Endothelial cell of umbilical vein (primary cell): ENCODE measurements at regions of chr2 and their contacts with region 1.

Region 1: GRCh38 chr2:238263204-238264071 is 23.6 kb upstream of the HES6 start:
- DNase-seq: peak; percentile 93
- H3K4me3 ChIP-seq: no peak overlapping the region
- H3K27ac ChIP-seq: no peak overlapping the region
- H3K4me1 ChIP-seq: peaks cover 15% of the 10 kb centered on the region
- H3K27me3 ChIP-seq: no peaks in the 10 kb centered on the region
- CTCF ChIP-seq: peak; percentile 87 to 90
- POLR2A ChIP-seq: no peak

Region 2: GRCh38 chr2:237858294-237859081 is 404.9 kb before region 1 on chr2:
- CTCF ChIA-PET with region 1: interaction called, 74 read pairs
- POLR2A ChIA-PET with region 1: no interaction called
- dilution Hi-C with region 1: no loop called
- intact Hi-C with region 1: loop called (anchors 1 kb)
- DNase-seq: peak; percentile 60
- H3K4me3 ChIP-seq: no peak overlapping the region
- H3K27ac ChIP-seq: no peak overlapping the region
- H3K4me1 ChIP-seq: no peaks in the 10 kb centered on the region
- H3K27me3 ChIP-seq: peaks cover 37 to 45% of the 10 kb centered on the region in 2 experiments
- CTCF ChIP-seq: peak; percentile 55 to 81
- POLR2A ChIP-seq: no peak

Region 3: DNA sequence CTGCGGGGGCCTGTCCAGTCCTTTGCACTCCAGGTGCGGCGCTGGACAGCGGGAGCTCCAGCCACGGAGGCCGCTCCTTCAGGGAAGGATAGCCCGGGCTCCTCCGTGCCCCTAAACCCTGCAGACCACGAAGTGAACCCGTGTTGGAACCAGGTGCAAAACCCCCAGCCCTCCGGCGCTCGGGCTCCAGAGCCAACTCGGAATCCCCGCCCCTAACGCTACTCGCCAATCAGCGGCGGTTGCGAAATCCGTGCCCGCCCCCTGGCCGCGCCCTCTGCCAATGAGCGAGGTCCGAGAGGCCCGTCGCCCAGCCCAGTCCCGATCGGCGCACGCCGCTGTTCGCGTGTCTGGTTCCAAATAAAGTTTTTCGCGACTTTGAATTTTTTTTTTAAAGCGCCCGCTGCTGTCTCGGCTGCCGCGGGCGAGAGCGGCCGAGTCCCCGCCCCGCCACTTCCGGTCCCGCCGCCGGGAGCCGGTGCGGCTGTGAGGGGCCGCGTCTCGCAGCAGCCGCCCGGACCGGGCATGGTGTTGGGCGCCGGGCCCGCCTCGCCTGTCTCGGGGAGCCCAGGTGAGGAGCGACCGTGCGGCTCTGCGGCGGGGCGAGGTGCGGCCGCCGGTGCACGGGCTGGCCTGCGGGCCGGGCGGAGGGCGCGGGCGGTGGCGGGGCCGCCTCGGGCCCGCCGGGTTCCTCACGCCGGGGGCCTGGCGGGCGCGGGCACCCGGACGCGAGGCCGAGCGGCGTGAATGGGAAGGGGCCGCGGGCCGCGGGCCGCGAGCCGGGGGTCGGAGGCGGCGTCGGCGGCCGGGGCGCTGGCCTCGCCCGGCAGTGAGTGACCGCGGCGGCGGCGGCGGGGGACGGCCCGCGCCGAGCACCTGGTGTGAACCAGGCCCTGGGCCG is 296.6 kb before region 1 on chr2 and contains the start of gene UBE2F:
- CTCF ChIA-PET with region 1: no interaction called
- POLR2A ChIA-PET with region 1: no interaction called
- dilution Hi-C with region 1: no loop called
- intact Hi-C with region 1: loop called (anchors 5 kb)
- DNase-seq: peak; percentile 96
- H3K4me3 ChIP-seq: peak within 1 kb of the TSS; percentile 40 to 65 (median 63)
- H3K27ac ChIP-seq: no peak within 1 kb of the TSS
- H3K4me1 ChIP-seq: peaks cover 10% of the 10 kb centered on the region
- H3K27me3 ChIP-seq: no peaks in the 10 kb centered on the region
- CTCF ChIP-seq: no peak
- POLR2A ChIP-seq: peak; percentile 73
- total RNA-seq, gene UBE2F: 42.3 and 47.4 TPM in 2 replicates

Region 4: DNA sequence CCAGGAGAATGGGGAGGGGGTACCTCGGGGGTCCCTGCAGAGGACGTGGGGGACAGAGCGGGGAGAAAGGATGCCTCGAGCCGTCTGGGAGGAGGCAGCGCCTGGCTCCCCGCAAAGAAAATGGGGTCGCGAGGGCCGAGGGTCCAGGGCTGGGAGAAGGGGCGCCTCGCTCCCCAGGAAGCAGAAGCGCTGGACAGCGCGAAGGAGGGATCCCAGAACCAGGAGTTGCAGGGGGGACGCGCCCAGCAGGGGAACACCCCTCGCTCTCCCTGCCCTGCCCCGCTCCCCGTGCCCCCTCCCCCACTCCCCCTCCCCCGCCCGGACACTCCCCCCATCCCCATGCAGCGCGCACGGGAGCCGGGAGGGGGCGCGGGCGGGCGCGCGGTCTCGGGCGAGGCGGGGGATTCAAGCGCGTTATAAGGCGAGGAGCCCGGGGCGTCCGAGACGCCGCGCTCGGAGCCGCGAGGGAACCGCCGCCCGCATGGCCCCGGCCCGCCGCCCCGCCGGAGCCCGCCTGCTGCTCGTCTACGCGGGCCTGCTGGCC is 104.8 kb before region 1 on chr2 and contains the start of gene ERFE:
- CTCF ChIA-PET with region 1: interaction called, 35 read pairs
- POLR2A ChIA-PET with region 1: no interaction called
- dilution Hi-C with region 1: no loop called
- intact Hi-C with region 1: loop called (anchors 1 kb)
- DNase-seq: no peak
- H3K4me3 ChIP-seq: no peak within 1 kb of the TSS
- H3K27ac ChIP-seq: no peak within 1 kb of the TSS
- H3K4me1 ChIP-seq: no peaks in the 10 kb centered on the region
- H3K27me3 ChIP-seq: peaks cover 3 to 7% of the 10 kb centered on the region in 2 experiments
- CTCF ChIP-seq: peak in 1 of 2 donors; percentile 47
- POLR2A ChIP-seq: no peak
- total RNA-seq, gene ERFE: 0.46 and 1.2 TPM in 2 replicates

Region 5: GRCh38 chr2:238239872-238240751 is 23.3 kb before region 1 on chr2 and contains the start of gene HES6:
- CTCF ChIA-PET with region 1: interaction called, 13 read pairs
- POLR2A ChIA-PET with region 1: no interaction called
- dilution Hi-C with region 1: no loop called
- intact Hi-C with region 1: loop called (anchors 1 kb)
- DNase-seq: peak; percentile 84
- H3K4me3 ChIP-seq: peak within 1 kb of the TSS; percentile 6 to 36 (median 7)
- H3K27ac ChIP-seq: no peak within 1 kb of the TSS
- H3K4me1 ChIP-seq: peaks cover 3% of the 10 kb centered on the region
- H3K27me3 ChIP-seq: peaks cover 9 to 12% of the 10 kb centered on the region in 2 experiments
- CTCF ChIP-seq: no peak
- POLR2A ChIP-seq: peak; percentile 57
- total RNA-seq, gene HES6: 5.1 and 5.4 TPM in 2 replicates

Region 6: DNA sequence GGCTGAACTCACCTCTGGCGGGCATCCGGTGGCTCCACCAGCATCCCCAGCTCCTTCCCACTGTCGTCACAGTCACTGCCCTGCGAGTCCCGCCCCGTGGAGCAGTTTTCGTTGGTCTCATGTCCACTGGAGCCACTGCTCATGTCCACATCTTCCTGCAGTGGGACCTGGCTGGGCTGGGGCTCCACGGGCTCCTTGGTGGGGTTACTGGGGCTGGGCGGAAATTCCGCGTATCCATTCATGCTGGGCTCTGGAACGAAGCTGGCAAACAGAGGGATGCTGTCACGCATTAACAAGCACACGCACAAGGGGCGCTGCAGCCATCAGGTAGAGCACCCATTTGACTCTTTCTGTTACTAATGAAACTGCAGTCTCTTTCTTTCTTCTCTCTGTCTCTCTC is 14.3 kb after region 1 on chr2:
- CTCF ChIA-PET with region 1: interaction called, 13 read pairs
- POLR2A ChIA-PET with region 1: no interaction called
- dilution Hi-C with region 1: no loop called
- intact Hi-C with region 1: no loop called
- DNase-seq: no peak
- H3K4me3 ChIP-seq: no peak overlapping the region
- H3K27ac ChIP-seq: no peak overlapping the region
- H3K4me1 ChIP-seq: no peaks in the 10 kb centered on the region
- H3K27me3 ChIP-seq: no peaks in the 10 kb centered on the region
- CTCF ChIP-seq: no peak
- POLR2A ChIP-seq: no peak

Region 7: GRCh38 chr2:238320246-238320647 is 56.8 kb after region 1 on chr2 and contains the start of gene TRAF3IP1:
- CTCF ChIA-PET with region 1: interaction called, 3 read pairs
- POLR2A ChIA-PET with region 1: no interaction called
- dilution Hi-C with region 1: no loop called
- intact Hi-C with region 1: loop called (anchors 2 kb)
- DNase-seq: peak; percentile 95
- H3K4me3 ChIP-seq: peak within 1 kb of the TSS; percentile 28 to 66 (median 63)
- H3K27ac ChIP-seq: no peak within 1 kb of the TSS
- H3K4me1 ChIP-seq: peaks cover 8% of the 10 kb centered on the region
- H3K27me3 ChIP-seq: peaks cover 2 to 3% of the 10 kb centered on the region in 2 experiments
- CTCF ChIP-seq: no peak
- POLR2A ChIP-seq: no peak
- total RNA-seq, gene TRAF3IP1: 15.0 and 15.9 TPM in 2 replicates